Calu3 (cell line): ENCODE measurements at regions of chr3 and their contacts with region 1.

Region 1: DNA sequence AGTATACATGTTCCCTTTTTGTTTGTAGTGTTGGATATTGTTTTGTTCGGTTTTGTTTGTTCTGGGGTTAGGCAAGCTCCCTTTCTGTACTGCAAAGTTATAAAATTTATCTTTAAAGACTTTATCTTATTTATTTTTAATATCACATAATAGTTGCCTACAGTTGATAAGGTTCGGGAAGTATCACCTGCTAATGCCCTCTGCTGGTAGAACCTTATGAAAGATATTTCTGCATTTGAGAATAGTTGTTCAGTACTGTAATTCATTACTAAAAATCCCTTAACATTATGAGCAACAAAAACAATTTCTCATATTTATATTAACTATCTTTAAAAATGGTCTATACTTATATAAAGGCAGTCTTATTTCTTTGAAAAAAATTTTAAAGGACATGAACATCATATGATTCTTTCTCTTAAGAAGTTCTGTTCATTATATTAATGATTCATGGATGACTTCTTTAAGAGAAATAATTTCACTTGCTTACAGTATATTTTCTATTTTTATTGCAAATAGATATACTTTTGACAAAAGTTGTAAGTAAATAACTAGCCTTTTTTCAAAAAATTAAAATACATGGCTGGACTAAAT is 1126.8 kb downstream of the SI start:
- DNase-seq: no peak
- H3K4me3 Mint-ChIP-seq: no peak overlapping the region
- H3K27ac Mint-ChIP-seq: no peak overlapping the region
- H3K4me1 Mint-ChIP-seq: no peaks in the 10 kb centered on the region
- H3K27me3 Mint-ChIP-seq: no peaks in the 10 kb centered on the region
- CTCF ChIP-seq: peak; percentile 58

Region 2: DNA sequence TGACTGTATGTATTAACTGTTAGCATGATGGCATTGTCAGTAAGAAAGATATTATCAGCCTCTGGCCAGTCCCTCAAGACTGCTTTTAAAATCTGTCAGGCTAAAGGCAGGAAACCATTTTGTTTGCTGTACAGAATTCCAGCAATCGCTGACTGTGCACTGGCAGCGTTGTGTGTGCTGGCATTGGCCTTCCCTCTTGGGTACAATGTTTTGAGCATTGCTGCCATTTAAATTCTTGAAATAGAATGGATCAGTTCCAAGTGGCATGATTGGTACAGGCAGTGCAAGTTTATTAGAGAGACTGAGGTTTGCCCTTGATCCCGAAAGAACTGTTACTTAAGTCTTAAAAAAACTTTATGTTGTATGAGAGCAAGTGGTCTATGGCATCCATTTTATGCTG is 1666.2 kb before region 1 on chr3:
- CTCF ChIA-PET with region 1: no interaction called
- intact Hi-C with region 1: loop called (anchors 5 kb)
- DNase-seq: no peak
- H3K4me3 Mint-ChIP-seq: no peak overlapping the region
- H3K27ac Mint-ChIP-seq: no peak overlapping the region
- H3K4me1 Mint-ChIP-seq: peaks cover 13% of the 10 kb centered on the region
- H3K27me3 Mint-ChIP-seq: no peaks in the 10 kb centered on the region
- CTCF ChIP-seq: no peak

Region 3: DNA sequence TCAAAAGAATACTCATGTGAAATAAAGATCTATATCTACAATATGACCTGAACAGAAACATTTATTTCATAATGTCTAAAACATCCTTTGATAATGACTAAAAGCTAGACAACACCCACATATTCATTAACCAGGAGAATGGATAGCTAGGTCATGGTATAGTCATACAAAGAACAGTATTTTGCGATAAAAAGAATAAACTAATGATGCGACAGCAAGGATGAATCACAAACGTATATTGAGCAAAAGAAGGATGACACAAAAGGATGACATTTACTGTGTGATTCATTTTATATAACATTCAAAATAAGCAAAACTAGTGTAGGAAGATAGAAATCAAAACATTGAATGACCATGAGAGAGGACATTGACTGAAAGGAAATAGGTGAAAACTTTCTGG is 1221.8 kb before region 1 on chr3:
- CTCF ChIA-PET with region 1: no interaction called
- intact Hi-C with region 1: no loop called
- DNase-seq: no peak
- H3K4me3 Mint-ChIP-seq: no peak overlapping the region
- H3K27ac Mint-ChIP-seq: no peak overlapping the region
- H3K4me1 Mint-ChIP-seq: no peaks in the 10 kb centered on the region
- H3K27me3 Mint-ChIP-seq: no peaks in the 10 kb centered on the region
- CTCF ChIP-seq: no peak

Region 4: GRCh38 chr3:163056874-163057497 is 894.5 kb before region 1 on chr3:
- CTCF ChIA-PET with region 1: no interaction called
- intact Hi-C with region 1: loop called (anchors 5 kb)
- DNase-seq: peak; percentile 80
- H3K4me3 Mint-ChIP-seq: no peak overlapping the region
- H3K27ac Mint-ChIP-seq: no peak overlapping the region
- H3K4me1 Mint-ChIP-seq: no peaks in the 10 kb centered on the region
- H3K27me3 Mint-ChIP-seq: no peaks in the 10 kb centered on the region
- CTCF ChIP-seq: peak; percentile 69

Region 5: GRCh38 chr3:163476183-163476582 is 475.3 kb before region 1 on chr3:
- CTCF ChIA-PET with region 1: no interaction called
- intact Hi-C with region 1: loop called (anchors 1 kb)
- DNase-seq: peak; percentile 16
- H3K4me3 Mint-ChIP-seq: no peak overlapping the region
- H3K27ac Mint-ChIP-seq: no peak overlapping the region
- H3K4me1 Mint-ChIP-seq: no peaks in the 10 kb centered on the region
- H3K27me3 Mint-ChIP-seq: no peaks in the 10 kb centered on the region
- CTCF ChIP-seq: peak; percentile 33

Region 6: DNA sequence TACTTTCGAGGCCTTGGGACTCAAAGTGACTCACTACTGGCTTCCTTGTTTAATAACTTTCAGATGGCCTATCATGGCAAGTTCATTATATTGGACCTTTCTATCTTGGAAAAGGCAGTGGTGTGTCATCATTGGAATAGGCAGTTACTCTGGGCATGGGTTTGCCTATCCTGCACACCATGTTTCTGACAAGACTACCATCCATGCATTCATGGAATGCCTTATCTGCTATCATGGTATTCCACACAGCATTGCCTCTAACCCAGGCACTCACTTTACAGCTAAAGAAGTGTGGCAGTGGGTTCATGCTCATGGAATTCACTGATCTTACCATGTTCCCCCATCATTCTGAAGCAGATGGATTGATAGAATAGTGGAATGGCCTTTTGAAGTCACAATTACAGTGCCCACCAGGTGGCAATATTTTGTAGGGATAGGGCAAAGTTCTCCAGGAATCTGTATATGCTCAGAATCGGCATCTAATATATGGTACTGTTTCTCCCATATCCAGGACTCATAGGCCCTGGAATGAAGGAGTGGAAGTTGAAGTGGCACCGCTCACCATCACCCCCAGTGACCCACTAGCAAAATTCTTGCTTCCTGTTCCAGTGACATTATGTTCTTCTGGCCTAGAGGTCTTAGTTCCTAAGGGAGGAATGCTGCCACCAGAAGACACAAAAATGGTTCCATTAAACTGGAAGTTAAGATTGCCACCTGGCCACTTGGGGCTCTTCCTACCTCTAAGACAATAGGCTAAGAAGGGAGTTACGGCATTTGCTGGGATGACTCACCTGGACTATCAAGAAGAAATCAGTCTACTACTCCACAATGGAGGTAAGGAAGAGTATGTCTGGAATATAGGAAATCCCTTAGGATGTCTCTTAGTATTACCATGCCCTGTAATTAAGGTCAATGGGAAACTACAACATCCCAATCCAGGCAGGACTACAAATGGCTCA is 34.6 kb before region 1 on chr3:
- CTCF ChIA-PET with region 1: no interaction called
- intact Hi-C with region 1: loop called (anchors 1 kb)
- DNase-seq: peak; percentile 57
- H3K4me3 Mint-ChIP-seq: no peak overlapping the region
- H3K27ac Mint-ChIP-seq: no peak overlapping the region
- H3K4me1 Mint-ChIP-seq: no peaks in the 10 kb centered on the region
- H3K27me3 Mint-ChIP-seq: no peaks in the 10 kb centered on the region
- CTCF ChIP-seq: peak; percentile 37